Endothelial cell of umbilical vein (primary cell): ENCODE measurements at regions of chr19 and their contacts with region 1.

Region 1: GRCh38 chr19:17260842-17261325 is 3.7 kb downstream of the USHBP1 start:
- DNase-seq: peak; percentile 74
- H3K4me3 ChIP-seq: no peak overlapping the region
- H3K27ac ChIP-seq: no peak overlapping the region
- H3K4me1 ChIP-seq: peaks cover 13% of the 10 kb centered on the region
- H3K27me3 ChIP-seq: no peaks in the 10 kb centered on the region
- CTCF ChIP-seq: peak; percentile 93 to 97
- POLR2A ChIP-seq: no peak

Region 2: DNA sequence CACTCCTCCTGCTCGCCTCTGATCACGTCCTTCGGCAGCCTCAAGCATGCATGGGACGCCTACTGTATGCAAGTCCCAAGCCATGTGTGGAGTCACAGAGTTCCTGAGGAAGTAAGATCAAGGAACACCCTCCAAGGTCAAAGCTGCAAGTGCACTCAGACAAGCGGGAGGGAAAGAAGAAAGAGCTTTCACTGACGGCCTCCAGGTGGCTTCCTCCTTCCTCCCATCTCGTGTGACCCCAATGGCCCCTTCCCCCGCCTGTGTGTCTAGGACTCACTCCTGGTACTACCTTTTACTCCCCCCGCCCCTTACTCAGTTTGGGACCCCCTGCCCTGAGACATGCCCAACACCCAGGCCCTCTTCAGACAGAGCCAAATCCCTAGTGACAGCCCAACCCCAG is 191.7 kb before region 1 on chr19:
- CTCF ChIA-PET with region 1: interaction called, 3 read pairs
- POLR2A ChIA-PET with region 1: interaction called, 7 read pairs
- dilution Hi-C with region 1: no loop called
- intact Hi-C with region 1: loop called (anchors 1 kb)
- DNase-seq: no peak
- H3K4me3 ChIP-seq: no peak overlapping the region
- H3K27ac ChIP-seq: no peak overlapping the region
- H3K4me1 ChIP-seq: peaks cover 8% of the 10 kb centered on the region
- H3K27me3 ChIP-seq: no peaks in the 10 kb centered on the region
- CTCF ChIP-seq: no peak
- POLR2A ChIP-seq: no peak

Region 3: DNA sequence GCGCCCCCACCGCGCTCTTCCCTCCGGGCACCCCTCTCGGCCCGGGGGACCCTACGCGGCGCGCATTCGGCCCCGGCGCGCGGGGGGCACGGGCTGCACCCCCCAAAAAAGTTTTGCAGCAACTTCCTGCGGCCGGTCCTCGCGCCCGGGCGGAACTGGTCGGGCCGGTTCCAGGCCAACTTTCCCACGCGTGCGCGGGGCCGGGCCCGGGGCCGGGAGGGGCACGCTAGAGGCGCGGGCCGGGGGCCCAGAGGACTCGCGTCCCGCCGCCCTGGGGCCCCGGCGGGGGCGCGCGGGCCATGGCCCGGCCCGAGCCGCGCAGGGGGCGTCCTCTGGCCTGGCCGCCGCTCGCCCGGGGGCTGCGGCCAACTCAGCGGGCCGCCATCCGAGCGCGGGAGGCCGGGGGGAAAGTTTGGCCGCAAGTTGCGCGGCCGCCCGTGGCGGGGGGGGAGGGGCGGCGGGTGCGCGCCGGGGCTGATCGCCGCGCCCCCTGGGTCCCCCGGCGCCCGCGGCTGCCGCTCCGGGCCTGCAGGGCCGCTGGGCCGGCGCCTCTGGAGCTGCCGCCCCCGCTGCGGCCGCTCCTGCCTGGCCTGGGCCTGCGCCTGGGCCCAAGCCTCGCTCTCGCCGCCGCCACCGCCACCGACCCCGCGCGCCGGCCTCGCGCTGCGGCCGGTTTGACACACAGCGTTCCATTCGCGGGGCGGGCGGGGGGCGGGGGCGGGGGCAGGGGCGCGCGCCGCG is 15.5 kb before region 1 on chr19 and contains the start of gene NR2F6:
- CTCF ChIA-PET with region 1: interaction called, 28 read pairs
- POLR2A ChIA-PET with region 1: interaction called, 3 read pairs
- dilution Hi-C with region 1: no loop called
- intact Hi-C with region 1: no loop called
- DNase-seq: no peak
- H3K4me3 ChIP-seq: peak within 1 kb of the TSS; percentile 65 to 84 (median 74)
- H3K27ac ChIP-seq: peak within 1 kb of the TSS; percentile 58
- H3K4me1 ChIP-seq: peaks cover 28% of the 10 kb centered on the region
- H3K27me3 ChIP-seq: no peaks in the 10 kb centered on the region
- CTCF ChIP-seq: no peak
- POLR2A ChIP-seq: no peak
- total RNA-seq, gene NR2F6: 36.1 and 39.2 TPM in 2 replicates

Region 4: DNA sequence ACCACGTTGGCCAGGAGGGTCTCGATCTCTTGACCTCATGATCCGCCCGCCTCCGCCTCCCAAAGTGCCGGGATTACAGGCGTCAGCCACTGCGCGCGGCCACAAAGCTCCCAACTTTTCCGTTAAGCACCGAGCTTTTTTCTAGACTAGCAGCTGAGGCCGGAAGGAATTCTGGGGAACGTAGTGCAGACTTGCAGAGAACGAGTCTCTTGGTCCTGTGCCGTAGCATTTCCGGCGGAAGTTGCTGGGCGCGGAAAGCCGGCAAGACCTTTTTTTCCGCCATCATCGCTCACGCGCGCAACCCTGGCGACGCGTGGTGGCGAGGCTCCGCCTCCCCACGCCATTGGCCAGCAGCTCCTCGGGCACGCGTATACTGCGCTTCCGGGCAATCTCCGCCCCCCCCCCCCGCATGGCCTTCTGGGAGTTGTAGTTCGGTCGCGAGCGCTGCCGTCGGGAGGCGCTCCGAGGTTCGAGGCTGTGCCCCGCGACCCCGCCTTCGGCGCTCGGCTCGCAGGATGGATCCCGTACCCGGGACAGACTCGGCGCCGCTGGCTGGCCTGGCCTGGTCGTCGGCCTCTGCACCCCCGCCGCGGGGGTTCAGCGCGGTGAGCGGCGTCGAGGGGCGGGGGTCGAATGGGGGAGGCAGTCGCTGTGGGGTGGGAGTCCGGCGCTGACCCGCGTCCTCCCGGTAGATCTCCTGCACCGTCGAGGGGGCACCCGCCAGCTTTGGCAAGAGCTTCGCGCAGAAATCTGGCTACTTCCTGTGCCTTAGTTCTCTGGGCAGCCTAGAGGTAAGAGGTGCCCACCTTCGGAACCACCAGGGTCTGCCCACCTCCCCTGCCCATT is 159.0 kb after region 1 on chr19 and contains the start of gene MVB12A:
- CTCF ChIA-PET with region 1: no interaction called
- POLR2A ChIA-PET with region 1: no interaction called
- dilution Hi-C with region 1: no loop called
- intact Hi-C with region 1: no loop called
- DNase-seq: peak; percentile 99
- H3K4me3 ChIP-seq: peak within 1 kb of the TSS; percentile 66 to 79 (median 68)
- H3K27ac ChIP-seq: peak within 1 kb of the TSS; percentile 64
- H3K4me1 ChIP-seq: peaks cover 14% of the 10 kb centered on the region
- H3K27me3 ChIP-seq: no peaks in the 10 kb centered on the region
- CTCF ChIP-seq: no peak
- POLR2A ChIP-seq: peak; percentile 60
- total RNA-seq, gene MVB12A: 58.1 and 63.3 TPM in 2 replicates